Activated naive CD4-positive, alpha-beta T cell treated with anti-CD3 and anti-CD28 coated beads, Interleukin-2, amount 10 ng/mL, durations not matched to agents 7 days and 5 days (primary cell): ENCODE measurements at regions of chr10 and their contacts with region 1.

Region 1: GRCh38 chr10:84352251-84352842 is 24.0 kb downstream of the CCSER2 start:
- DNase-seq: peak; percentile 77
- H3K4me3 Mint-ChIP-seq: no peak overlapping the region
- H3K27ac Mint-ChIP-seq: no peak overlapping the region
- H3K4me1 Mint-ChIP-seq: peaks cover 49% of the 10 kb centered on the region
- H3K27me3 Mint-ChIP-seq: no peaks in the 10 kb centered on the region

Region 2: DNA sequence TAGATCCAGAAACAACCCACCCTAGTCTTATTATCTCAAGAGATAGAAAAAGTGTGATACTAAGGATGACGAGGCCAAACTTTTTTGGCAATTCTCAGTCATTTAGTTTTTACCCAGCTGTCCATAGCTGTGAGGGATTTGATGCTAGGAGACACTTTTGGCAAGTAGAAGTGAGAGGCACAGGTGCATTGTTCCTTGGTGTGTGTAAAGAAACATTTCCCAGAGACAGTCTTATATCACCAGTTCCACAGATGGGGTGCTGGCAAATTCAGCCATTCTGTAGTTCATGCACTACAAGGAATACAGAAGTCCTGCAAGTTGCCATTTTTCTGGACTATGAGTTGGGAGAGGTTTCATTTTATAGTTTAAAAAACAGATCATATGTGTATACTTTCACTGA is 616.3 kb before region 1 on chr10:
- CTCF ChIA-PET with region 1: no interaction called
- DNase-seq: no peak
- H3K4me3 Mint-ChIP-seq: no peak overlapping the region
- H3K27ac Mint-ChIP-seq: no peak overlapping the region
- H3K4me1 Mint-ChIP-seq: no peaks in the 10 kb centered on the region
- H3K27me3 Mint-ChIP-seq: no peaks in the 10 kb centered on the region

Region 3: DNA sequence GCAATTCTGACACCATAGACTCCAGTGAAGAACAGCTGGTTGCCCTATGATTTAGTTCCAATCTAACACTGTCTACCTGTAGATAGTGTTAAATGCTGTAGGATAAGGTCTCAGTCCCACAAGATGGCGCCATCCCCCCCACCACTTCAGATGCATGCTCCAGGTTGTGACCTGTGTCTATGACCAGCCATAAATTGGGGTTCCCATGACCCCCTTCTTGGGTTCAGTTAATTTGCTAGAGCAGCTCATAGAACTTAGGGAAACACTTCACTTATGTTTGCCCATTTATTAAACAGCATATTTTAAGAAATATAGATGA is 10.8 kb before region 1 on chr10:
- CTCF ChIA-PET with region 1: interaction called, 18 read pairs
- DNase-seq: peak; percentile 24
- H3K4me3 Mint-ChIP-seq: no peak overlapping the region
- H3K27ac Mint-ChIP-seq: peak overlapping the region; percentile 30
- H3K4me1 Mint-ChIP-seq: peaks cover 58% of the 10 kb centered on the region
- H3K27me3 Mint-ChIP-seq: no peaks in the 10 kb centered on the region

Region 4: DNA sequence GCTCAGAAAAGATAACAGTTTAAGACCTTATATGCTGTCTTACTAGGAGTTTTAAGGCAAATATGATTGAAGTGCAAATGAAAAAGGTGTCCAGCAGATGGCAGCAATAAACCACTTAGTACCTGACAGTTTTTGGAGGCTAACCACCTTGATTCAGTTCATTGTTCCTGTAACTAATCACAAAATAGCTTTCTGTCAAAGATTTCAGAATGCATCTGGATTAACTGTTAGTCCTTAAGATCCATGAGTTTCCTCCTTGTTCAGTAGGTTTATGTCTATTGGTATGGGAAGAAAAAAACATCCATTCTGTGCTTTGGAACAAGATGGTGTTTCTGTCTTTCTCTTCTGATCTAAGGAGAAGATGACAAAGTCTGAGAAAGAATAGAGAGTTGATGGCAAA is 22.7 kb after region 1 on chr10:
- CTCF ChIA-PET with region 1: interaction called, 11 read pairs
- DNase-seq: peak; percentile 44
- H3K4me3 Mint-ChIP-seq: no peak overlapping the region
- H3K27ac Mint-ChIP-seq: peak overlapping the region; percentile 16
- H3K4me1 Mint-ChIP-seq: peaks cover 15% of the 10 kb centered on the region
- H3K27me3 Mint-ChIP-seq: no peaks in the 10 kb centered on the region